Transverse colon (tissue), 4 donors: ENCODE measurements at regions of chr20 and their contacts with region 1.

Region 1: GRCh38 chr20:18613556-18613955 is 25.7 kb downstream of the DTD1 start:
- DNase-seq: no peak
- H3K4me3 ChIP-seq: no peak overlapping the region
- H3K27ac ChIP-seq: no peak overlapping the region
- H3K4me1 ChIP-seq: peaks cover 0 to 9% (median 2%) of the 10 kb centered on the region in 4 donors
- H3K27me3 ChIP-seq: no peaks in the 10 kb centered on the region
- CTCF ChIP-seq: no peak
- EP300 ChIP-seq: no peak
- POLR2A ChIP-seq: no peak

Region 2: DNA sequence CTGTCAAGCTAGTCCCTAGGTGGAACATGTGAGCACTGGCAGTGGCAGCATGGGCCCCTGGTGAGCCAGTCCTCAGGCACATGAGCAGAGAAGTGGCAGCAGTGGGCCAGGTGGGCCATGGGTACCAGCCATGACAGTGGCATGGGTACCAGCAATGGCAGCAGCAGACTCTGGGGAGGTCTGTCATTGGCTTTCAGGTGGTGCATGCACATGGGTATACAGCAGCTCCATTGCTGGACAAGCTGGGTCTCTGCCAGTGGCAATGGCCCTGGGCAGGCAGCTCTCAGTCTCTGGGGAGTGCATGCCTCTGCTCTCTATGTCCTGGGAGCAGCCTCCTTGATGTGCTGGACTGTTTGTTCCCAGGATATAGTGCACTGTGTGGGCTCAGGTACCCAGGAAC is 410.6 kb before region 1 on chr20:
- in situ Hi-C with region 1: no loop called
- intact Hi-C with region 1: loop called (anchors 10 kb)
- DNase-seq: no peak
- H3K4me3 ChIP-seq: no peak overlapping the region
- H3K27ac ChIP-seq: no peak overlapping the region
- H3K4me1 ChIP-seq: no peaks in the 10 kb centered on the region
- H3K27me3 ChIP-seq: no peaks in the 10 kb centered on the region
- CTCF ChIP-seq: no peak
- EP300 ChIP-seq: no peak
- POLR2A ChIP-seq: no peak

Region 3: DNA sequence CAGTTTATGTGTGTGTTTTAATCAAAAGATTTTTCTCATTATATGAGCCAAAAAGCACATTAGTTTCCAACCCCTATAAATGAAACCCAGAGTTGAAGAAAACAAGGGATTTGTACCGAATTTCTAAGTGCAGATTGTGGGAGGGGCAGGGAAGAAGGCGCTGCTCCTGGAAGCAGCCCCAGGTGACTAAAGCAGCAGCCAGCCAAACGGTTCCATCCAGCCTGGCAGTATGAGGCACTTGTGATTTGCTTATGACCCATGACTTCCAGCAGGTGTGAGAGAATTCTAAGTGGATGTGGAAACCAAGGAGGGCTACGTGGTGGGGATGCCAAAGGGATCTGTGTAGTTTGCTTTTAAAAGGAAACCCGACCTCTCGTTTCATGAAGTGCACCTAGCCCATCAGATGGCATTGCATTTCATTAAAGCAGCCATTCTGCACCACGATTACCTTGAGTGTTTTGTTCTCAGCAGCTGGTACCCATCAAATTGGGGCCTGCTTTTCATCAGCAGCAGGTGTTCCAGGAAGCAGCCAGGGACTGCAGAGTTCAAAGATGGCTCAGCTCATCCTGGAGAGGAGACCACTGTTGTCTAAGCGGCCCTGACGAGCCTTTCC is 53.4 kb after region 1 on chr20:
- in situ Hi-C with region 1: no loop called
- intact Hi-C with region 1: no loop called
- DNase-seq: no peak
- H3K4me3 ChIP-seq: no peak overlapping the region
- H3K27ac ChIP-seq: peak overlapping the region in 1 of 4 donors; percentile 4
- H3K4me1 ChIP-seq: no peaks in the 10 kb centered on the region
- H3K27me3 ChIP-seq: no peaks in the 10 kb centered on the region
- CTCF ChIP-seq: no peak
- EP300 ChIP-seq: no peak
- POLR2A ChIP-seq: no peak